ENCODE measurements at regions of chr6 and their contacts with region 1.

Region 1: DNA sequence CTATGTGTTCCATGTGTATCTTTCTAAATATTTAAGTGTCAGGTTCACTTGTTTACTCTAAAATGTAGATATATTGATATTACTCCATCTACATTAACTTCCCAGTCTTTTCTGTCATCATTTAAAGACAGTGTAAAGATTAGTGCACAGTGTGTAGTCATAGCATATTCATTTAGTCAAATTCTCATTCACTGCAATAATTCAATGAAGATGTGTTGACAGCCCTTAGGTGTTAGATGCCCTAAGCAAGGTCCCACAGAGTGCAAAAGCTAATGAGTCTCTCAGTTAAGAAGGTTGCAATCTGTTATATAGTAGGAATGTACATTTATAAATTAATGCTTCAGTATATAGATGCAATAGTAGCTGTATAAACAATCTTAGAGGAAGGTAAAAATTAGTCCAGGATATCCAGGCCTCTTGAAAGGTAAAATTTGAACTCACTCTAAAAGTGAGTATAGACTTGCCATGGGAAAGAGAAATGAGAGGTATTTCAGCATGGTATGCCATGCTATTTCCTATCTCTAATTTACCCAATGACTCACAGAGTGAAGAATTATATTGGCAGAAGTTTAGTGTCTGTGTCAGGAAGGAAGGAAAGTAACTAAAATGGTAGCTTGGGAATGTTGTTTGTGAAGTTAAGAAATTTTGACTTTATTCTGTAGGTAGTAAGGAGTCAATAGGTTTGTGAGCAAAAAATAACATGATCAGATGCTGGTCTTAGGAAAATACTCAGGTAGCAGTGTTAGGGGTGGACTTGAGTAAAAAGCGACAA is 969.9 kb upstream of the CITED2 start:
- DNase-seq: peak; percentile 70
- H3K4me3 ChIP-seq: no peak overlapping the region
- H3K27ac ChIP-seq: peak overlapping the region; percentile 77
- H3K4me1 ChIP-seq: peaks cover 40% of the 10 kb centered on the region
- H3K27me3 ChIP-seq: no peaks in the 10 kb centered on the region
- CTCF ChIP-seq: no peak
- POLR2A ChIP-seq: peak; percentile 39

Region 2: DNA sequence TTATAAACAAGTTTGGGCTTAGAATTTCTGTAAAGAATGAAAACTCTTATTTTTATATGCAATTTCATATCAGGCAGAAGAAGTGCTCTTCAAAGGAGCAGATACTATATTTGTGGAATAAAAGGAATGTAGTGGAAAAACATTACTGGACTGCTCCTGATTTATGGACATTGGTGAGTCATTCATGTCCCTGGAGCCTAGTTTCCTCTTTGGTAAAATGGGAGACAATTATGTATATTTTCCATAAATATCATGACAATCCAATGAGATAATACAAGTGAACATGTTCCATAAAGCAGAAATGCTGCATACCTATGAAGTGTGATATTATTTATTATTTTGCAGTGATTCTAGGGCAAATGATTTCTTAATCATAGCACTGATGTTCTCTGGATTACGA is 524.1 kb before region 1 on chr6:
- CTCF ChIA-PET with region 1: no interaction called
- POLR2A ChIA-PET with region 1: no interaction called
- dilution Hi-C with region 1: no loop called
- intact Hi-C with region 1: loop called (anchors 1 kb)
- DNase-seq: peak; percentile 92
- H3K4me3 ChIP-seq: no peak overlapping the region
- H3K27ac ChIP-seq: peak overlapping the region; percentile 90
- H3K4me1 ChIP-seq: peaks cover 26% of the 10 kb centered on the region
- H3K27me3 ChIP-seq: no peaks in the 10 kb centered on the region
- CTCF ChIP-seq: no peak
- POLR2A ChIP-seq: no peak

Region 3: DNA sequence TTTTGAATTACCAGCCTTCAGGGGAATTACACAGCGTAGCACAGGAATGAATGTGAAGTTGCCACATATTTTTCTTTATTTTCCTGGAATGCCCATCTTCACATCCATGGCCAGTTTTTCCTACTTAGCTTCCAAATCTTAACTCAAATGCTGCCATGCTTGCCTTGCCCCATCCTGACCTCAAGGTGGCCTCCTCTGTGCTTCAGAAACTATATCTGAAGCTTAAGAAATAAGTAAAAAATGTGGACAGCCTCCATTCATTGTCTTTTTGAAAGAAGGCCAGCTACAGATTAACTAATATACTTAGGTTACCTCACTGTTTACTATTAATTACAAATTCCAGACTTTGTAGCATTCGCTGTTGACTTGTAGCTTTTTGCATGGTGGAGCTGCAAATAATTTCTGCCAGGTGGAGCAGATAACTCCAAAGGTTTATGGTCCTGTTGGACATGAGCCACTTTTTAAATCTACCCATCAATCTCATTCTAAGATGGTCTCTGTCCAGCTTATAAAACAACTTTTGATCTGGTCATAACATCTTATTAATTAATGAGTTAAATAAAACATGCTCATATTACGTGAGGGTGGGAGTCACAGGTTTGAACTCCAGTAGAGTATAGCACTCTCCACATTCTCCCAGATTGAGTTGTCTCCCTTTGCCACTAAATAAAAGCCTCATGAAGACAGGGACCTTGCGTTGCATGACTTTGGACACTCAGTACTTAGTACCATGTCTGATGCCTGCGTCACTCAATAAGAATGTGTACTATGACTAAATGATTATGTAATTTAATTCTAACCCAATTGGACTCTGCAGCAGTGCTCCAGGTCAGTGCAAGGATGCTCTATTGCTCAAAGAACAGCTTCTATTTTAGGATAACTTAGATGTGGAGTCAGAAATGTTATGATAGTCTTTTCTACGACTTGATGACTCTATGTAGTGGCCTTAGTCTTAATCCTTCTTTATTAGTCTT is 291.3 kb before region 1 on chr6:
- CTCF ChIA-PET with region 1: interaction called, 10 read pairs
- POLR2A ChIA-PET with region 1: no interaction called
- dilution Hi-C with region 1: no loop called
- intact Hi-C with region 1: loop called (anchors 1 kb)
- DNase-seq: peak; percentile 26
- H3K4me3 ChIP-seq: no peak overlapping the region
- H3K27ac ChIP-seq: no peak overlapping the region
- H3K4me1 ChIP-seq: peaks cover 7% of the 10 kb centered on the region
- H3K27me3 ChIP-seq: no peaks in the 10 kb centered on the region
- CTCF ChIP-seq: peak; percentile 16 to 31
- POLR2A ChIP-seq: no peak

Region 4: GRCh38 chr6:140225701-140226436 is 118.5 kb before region 1 on chr6:
- CTCF ChIA-PET with region 1: no interaction called
- POLR2A ChIA-PET with region 1: no interaction called
- dilution Hi-C with region 1: no loop called
- intact Hi-C with region 1: loop called (anchors 1 kb)
- DNase-seq: peak; percentile 81
- H3K4me3 ChIP-seq: no peak overlapping the region
- H3K27ac ChIP-seq: peak overlapping the region; percentile 45
- H3K4me1 ChIP-seq: peaks cover 15% of the 10 kb centered on the region
- H3K27me3 ChIP-seq: no peaks in the 10 kb centered on the region
- CTCF ChIP-seq: no peak
- POLR2A ChIP-seq: no peak

Region 5: DNA sequence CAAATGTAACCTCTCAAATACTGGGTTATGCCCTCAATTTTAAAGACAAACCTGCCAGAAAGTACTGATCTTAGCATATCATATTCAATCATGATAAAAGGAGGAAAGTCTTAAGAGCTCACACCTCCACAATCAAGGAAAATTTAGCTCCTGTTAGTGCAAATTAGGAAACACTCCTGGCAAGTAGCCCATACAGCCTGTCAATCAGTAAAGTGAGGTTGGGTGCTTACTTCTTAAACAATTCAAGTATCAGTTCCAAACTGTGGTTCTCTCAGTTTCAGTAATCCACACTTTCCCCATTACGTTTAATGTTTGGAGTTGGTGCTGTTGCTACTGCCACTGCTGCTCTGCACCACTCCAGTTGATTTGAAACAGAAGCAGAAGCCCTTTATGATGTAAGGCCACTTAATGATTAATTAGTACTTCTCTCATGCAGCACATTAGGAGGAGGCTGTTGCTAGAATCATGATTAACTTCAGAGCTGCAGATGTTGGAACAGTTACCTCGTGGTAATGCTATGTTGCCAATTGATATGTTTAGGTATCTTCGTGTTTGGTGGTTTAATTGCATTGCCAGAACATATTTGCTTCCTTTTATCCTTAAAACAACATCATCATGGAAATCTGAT is 16.2 kb after region 1 on chr6:
- CTCF ChIA-PET with region 1: no interaction called
- POLR2A ChIA-PET with region 1: no interaction called
- dilution Hi-C with region 1: no loop called
- intact Hi-C with region 1: no loop called
- DNase-seq: no peak
- H3K4me3 ChIP-seq: no peak overlapping the region
- H3K27ac ChIP-seq: no peak overlapping the region
- H3K4me1 ChIP-seq: no peaks in the 10 kb centered on the region
- H3K27me3 ChIP-seq: no peaks in the 10 kb centered on the region
- CTCF ChIP-seq: no peak
- POLR2A ChIP-seq: no peak

Region 6: DNA sequence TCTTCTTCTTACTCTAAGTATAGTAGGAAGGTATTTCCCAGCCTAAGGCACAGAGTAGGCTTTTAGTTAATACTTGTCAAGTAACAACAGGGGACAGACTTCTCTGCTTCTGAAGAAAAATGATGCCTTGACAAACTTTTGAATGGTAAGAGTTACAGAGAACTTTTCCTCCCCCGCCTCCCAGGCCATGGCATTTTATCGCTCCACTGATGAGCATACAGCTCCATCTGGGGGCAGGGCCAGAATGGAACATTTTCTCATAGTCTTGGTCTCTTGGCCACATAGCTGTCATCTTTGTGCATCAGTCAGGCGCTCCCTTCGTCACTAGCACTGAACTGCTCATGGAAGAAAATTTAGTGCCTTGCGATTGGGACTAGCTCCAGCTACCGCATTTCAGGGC is 96.9 kb after region 1 on chr6:
- CTCF ChIA-PET with region 1: no interaction called
- POLR2A ChIA-PET with region 1: no interaction called
- dilution Hi-C with region 1: no loop called
- intact Hi-C with region 1: loop called (anchors 2 kb)
- DNase-seq: peak; percentile 57
- H3K4me3 ChIP-seq: no peak overlapping the region
- H3K27ac ChIP-seq: no peak overlapping the region
- H3K4me1 ChIP-seq: peaks cover 18% of the 10 kb centered on the region
- H3K27me3 ChIP-seq: no peaks in the 10 kb centered on the region
- CTCF ChIP-seq: peak; percentile 27 to 40
- POLR2A ChIP-seq: no peak

Region 7: GRCh38 chr6:140602431-140603248 is 258.3 kb after region 1 on chr6:
- CTCF ChIA-PET with region 1: no interaction called
- POLR2A ChIA-PET with region 1: no interaction called
- dilution Hi-C with region 1: no loop called
- intact Hi-C with region 1: no loop called
- DNase-seq: no peak
- H3K4me3 ChIP-seq: no peak overlapping the region
- H3K27ac ChIP-seq: no peak overlapping the region
- H3K4me1 ChIP-seq: peaks cover 3% of the 10 kb centered on the region
- H3K27me3 ChIP-seq: no peaks in the 10 kb centered on the region
- CTCF ChIP-seq: no peak
- POLR2A ChIP-seq: no peak

Region 8: GRCh38 chr6:140921366-140922226 is 577.3 kb after region 1 on chr6:
- CTCF ChIA-PET with region 1: interaction called, 6 read pairs
- POLR2A ChIA-PET with region 1: no interaction called
- dilution Hi-C with region 1: no loop called
- intact Hi-C with region 1: loop called (anchors 1 kb)
- DNase-seq: peak; percentile 89
- H3K4me3 ChIP-seq: no peak overlapping the region
- H3K27ac ChIP-seq: no peak overlapping the region
- H3K4me1 ChIP-seq: peaks cover 3% of the 10 kb centered on the region
- H3K27me3 ChIP-seq: no peaks in the 10 kb centered on the region
- CTCF ChIP-seq: peak; percentile 58 to 69
- POLR2A ChIP-seq: no peak

Measured in endothelial cell of umbilical vein (primary cell).